ENCODE measurements at regions of chr3 and their contacts with region 1.

Region 1: DNA sequence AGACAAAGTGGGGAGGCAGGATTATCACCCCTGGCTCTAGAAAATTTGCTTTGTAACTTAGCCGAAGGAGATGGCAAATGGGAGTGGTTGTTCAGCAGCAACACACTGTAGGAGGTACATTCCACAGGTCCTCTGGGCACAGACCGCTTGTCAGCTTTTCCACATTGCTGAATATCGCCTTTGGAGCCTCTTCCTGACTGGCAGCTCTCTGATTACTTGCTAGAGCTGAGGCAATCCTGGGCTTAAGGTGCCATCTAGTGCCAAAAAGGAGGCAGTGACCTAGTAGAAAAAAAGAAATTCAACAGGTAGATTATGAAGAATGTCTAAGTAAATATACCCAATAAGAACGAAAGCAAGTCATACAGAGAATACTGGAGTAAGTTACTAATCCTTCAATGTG is 13.1 kb upstream of the SCN5A start:
- DNase-seq: no peak
- ATAC-seq: no peak
- H3K4me3 Mint-ChIP-seq: no peak overlapping the region
- H3K27ac Mint-ChIP-seq: no peak overlapping the region
- H3K4me1 Mint-ChIP-seq: no peaks in the 10 kb centered on the region
- H3K27me3 Mint-ChIP-seq: peaks cover 53% of the 10 kb centered on the region

Region 2: GRCh38 chr3:38651154-38651789 is 11.3 kb before region 1 on chr3:
- CTCF ChIA-PET with region 1: interaction called, 21 read pairs
- DNase-seq: peak; percentile 77
- ATAC-seq: peak; percentile 57
- H3K4me3 Mint-ChIP-seq: no peak overlapping the region
- H3K27ac Mint-ChIP-seq: no peak overlapping the region
- H3K4me1 Mint-ChIP-seq: peaks cover 8% of the 10 kb centered on the region
- H3K27me3 Mint-ChIP-seq: peaks cover 20% of the 10 kb centered on the region